Activated CD4-positive, alpha-beta memory T cell treated with anti-CD3 and anti-CD28 coated beads for 36 hours (primary cell): ENCODE measurements at regions of chr16 and their contacts with region 1.

Region 1: GRCh38 chr16:74666425-74667254 is at the start of gene RFWD3:
- DNase-seq: peak; percentile 98
- H3K4me3 Mint-ChIP-seq: peak within 1 kb of the TSS; percentile 85
- H3K27ac Mint-ChIP-seq: peak within 1 kb of the TSS; percentile 91
- H3K4me1 Mint-ChIP-seq: peaks cover 39% of the 10 kb centered on the region
- H3K27me3 Mint-ChIP-seq: no peaks in the 10 kb centered on the region
- total RNA-seq, gene RFWD3: 95.3 to 109 TPM

Region 2: DNA sequence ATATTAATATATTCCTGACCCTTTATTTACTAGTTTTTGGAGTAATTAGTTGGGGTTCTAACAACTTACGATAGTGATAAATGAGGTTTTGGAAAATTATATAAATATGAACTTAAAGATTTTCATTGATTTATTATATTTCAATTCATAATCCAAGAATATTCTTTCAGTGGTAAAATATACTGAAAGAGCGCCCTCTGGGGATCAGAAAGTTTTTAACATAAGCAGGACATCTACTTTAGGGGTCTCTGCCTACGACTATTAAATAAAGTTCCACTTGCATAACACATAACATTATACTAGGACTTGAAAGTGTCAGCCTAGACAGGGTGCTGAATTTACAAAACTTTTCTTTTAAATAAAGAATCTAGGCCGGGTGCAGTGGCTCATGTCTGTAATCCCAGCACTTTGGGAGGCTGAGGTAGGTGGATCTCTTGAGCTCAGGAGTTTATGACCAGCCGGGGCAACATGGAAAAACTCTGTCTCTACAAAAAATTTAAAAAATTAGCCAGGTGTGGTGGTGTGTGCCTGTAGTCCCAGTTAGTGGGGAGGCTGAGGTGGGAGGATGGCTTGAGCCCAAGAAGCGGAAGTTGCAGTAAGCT is 15.6 kb before region 1 on chr16:
- CTCF ChIA-PET with region 1: interaction called, 12 read pairs
- POLR2A ChIA-PET with region 1: interaction called, 9 read pairs
- intact Hi-C with region 1: no loop called
- DNase-seq: no peak
- H3K4me3 Mint-ChIP-seq: no peak overlapping the region
- H3K27ac Mint-ChIP-seq: no peak overlapping the region
- H3K4me1 Mint-ChIP-seq: peaks cover 30% of the 10 kb centered on the region
- H3K27me3 Mint-ChIP-seq: no peaks in the 10 kb centered on the region